Heart right ventricle (tissue), 16 donors: ENCODE measurements at regions of chr22 and their contacts with region 1.

Region 1: GRCh38 chr22:31148953-31149627 is 8.8 kb upstream of the PLA2G3 start:
- DNase-seq: peak; percentile 72 to 84
- ATAC-seq: peak; percentile 92 to 99 (median 96)
- H3K4me3 ChIP-seq: no peak overlapping the region
- H3K27ac ChIP-seq: peak overlapping the region; percentile 2 to 82 (median 77)
- H3K4me1 ChIP-seq: peaks cover 0 to 20% (median 12%) of the 10 kb centered on the region in 9 donors
- H3K27me3 ChIP-seq: no peaks in the 10 kb centered on the region
- CTCF ChIP-seq: peak in 8 of 9 donors; percentile 83 to 97 (median 92)

Region 2: GRCh38 chr22:30634471-30635233 is 514.4 kb before region 1 on chr22:
- intact Hi-C with region 1: loop called in 1 of 10 experiments (anchors 10 kb)
- DNase-seq: peak; percentile 87 to 89
- ATAC-seq: peak; percentile 68 to 89 (median 80)
- H3K4me3 ChIP-seq: peak overlapping the region; percentile 52 to 91 (median 74)
- H3K27ac ChIP-seq: peak overlapping the region; percentile 60 to 97 (median 90)
- H3K4me1 ChIP-seq: peaks cover 16 to 38% (median 33%) of the 10 kb centered on the region in 9 donors
- H3K27me3 ChIP-seq: no peaks in the 10 kb centered on the region
- CTCF ChIP-seq: peak; percentile 86 to 97 (median 95)

Region 3: DNA sequence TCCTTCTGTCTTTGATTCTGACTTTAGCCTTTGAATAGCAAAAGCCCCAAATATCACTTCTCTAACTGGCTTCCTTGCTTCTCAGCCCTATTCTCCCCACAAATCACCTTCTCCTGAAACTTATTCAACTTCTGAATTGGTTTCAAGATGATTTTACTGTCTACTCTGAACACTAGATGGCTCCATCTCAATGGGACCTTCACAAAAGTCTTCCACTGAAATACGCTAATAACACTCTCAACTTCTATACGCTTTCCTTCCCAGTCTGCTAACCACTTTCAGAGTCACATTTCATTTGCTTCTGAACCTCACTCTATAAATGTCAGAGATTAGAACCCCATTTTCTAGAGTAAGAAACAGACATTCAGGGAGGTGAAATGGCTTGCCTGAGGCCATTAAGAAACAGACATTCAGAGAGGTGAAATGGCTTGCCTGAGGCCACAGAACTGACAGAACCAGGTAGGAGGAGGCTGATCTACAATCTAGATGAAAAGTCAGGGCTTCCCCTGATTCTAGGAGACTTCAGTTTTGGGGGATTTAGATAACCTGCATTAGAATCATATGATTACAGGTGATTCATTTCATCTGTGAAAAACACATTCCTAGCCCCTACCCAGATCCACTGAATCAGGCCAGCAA is 201.2 kb before region 1 on chr22:
- intact Hi-C with region 1: loop called (anchors 2 to 10 kb)
- DNase-seq: peak in 1 of 2 donors; percentile 20
- ATAC-seq: peak in 7 of 8 donors; percentile 65 to 87 (median 77)
- H3K4me3 ChIP-seq: no peak overlapping the region
- H3K27ac ChIP-seq: peak overlapping the region in 8 of 10 donors; percentile 28 to 71 (median 56)
- H3K4me1 ChIP-seq: peaks cover 5 to 30% (median 21%) of the 10 kb centered on the region in 9 donors
- H3K27me3 ChIP-seq: no peaks in the 10 kb centered on the region
- CTCF ChIP-seq: peak; percentile 39 to 82 (median 67)

Region 4: DNA sequence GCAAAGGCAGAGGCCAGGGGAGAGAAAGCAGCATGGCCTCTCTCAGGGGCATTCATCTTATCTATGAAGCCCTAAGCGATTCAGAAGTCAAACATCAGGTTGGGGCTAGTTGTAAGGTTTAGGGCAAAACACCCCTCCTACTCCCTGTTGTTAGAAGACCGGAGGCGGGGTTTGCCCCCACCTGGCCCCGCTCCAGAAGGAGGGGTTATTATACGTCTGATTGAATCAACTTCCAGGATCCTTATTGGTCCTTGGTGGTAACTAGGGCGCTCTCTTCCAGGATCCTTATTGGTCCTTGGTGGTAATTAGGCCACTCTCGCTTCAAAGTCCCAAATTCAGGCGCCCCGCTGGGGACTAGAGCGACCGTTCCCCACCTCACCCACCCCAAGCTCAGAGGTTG is 80.1 kb before region 1 on chr22:
- intact Hi-C with region 1: no loop called
- DNase-seq: no peak
- ATAC-seq: no peak
- H3K4me3 ChIP-seq: no peak overlapping the region
- H3K27ac ChIP-seq: no peak overlapping the region
- H3K4me1 ChIP-seq: peaks cover 0 to 14% (median 0%) of the 10 kb centered on the region in 9 donors
- H3K27me3 ChIP-seq: no peaks in the 10 kb centered on the region
- CTCF ChIP-seq: no peak

Region 5: DNA sequence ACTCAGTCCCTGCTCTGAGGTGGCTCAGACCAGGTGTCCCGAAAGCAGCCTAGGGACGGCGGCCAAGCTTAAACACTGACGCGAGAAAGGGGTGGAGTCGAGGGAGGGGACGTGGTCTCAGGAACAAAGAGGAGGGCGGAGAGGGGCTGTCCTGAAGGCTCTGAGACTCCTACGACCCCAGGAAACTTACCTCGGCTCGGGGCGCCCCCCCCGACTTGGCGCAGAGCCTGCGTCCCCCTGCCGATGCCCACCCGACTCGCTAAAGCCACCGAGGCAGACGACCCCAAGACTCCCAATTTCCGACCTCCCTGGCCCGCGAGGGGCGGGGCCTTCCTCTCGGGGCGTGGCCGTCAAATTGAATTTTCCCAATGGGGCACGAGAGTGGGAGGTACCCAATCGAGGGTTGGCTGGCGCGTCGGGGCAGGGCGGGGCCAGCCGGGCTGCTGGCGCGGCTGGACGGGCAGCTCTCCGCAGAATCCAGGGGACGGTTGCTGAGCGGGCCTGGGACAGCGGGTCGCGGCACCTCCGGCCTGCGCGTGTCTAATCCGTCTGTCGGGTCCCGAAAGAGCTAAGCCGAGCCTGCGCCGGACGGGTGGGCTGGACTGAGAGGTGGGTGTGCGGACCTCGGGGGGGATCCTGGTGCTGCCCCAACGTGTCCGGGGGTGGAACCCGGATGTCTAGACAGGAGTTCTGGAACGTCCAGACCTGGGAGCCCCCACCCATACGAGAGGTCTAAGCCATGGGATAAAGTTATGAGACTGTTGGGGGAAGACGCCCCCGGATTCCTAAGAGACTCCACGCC is 68.0 kb before region 1 on chr22 and contains the start of gene SMTN:
- intact Hi-C with region 1: loop called in 4 of 10 experiments (anchors 5 kb)
- DNase-seq: peak; percentile 94 to 95
- ATAC-seq: peak; percentile 80 to 88 (median 84)
- H3K4me3 ChIP-seq: peak within 1 kb of the TSS; percentile 55 to 91 (median 74)
- H3K27ac ChIP-seq: peak within 1 kb of the TSS; percentile 78 to 98 (median 96)
- H3K4me1 ChIP-seq: peaks cover 16 to 56% (median 42%) of the 10 kb centered on the region in 9 donors
- H3K27me3 ChIP-seq: no peaks in the 10 kb centered on the region
- CTCF ChIP-seq: no peak
- total RNA-seq, gene SMTN: 146 to 290 (median 204) TPM

Region 6: GRCh38 chr22:31107178-31107893 is 41.8 kb before region 1 on chr22 and contains the start of gene SELENOM:
- intact Hi-C with region 1: loop called (anchors 1 to 5 kb)
- DNase-seq: peak; percentile 97 to 98
- ATAC-seq: peak; percentile 92 to 96 (median 94)
- H3K4me3 ChIP-seq: peak within 1 kb of the TSS; percentile 54 to 90 (median 80)
- H3K27ac ChIP-seq: peak within 1 kb of the TSS; percentile 55 to 96 (median 94)
- H3K4me1 ChIP-seq: peaks cover 0 to 45% (median 24%) of the 10 kb centered on the region in 9 donors
- H3K27me3 ChIP-seq: no peaks in the 10 kb centered on the region
- CTCF ChIP-seq: peak; percentile 91 to 99 (median 93)
- total RNA-seq, gene SELENOM: 21.5 to 73.9 (median 45.3) TPM

Region 7: DNA sequence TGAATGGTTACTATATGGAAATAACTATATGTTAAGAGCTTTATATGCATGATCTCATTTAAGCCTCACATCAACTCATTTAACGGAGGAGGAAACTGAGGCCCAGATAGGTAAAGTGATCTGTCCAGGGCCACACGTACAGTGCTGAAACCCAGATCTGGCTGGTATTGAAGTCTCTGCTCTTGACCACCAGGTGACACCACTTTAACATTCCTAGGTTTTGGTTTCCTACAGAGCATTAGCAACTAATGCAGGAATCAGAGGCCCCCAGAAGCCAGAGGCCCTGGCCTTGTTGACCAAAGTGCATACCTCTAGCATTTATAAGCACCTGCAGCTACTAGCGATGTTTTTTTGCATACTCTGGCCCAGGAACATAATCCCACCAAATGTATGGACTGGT is 50.1 kb after region 1 on chr22:
- intact Hi-C with region 1: no loop called
- DNase-seq: no peak
- ATAC-seq: no peak
- H3K4me3 ChIP-seq: no peak overlapping the region
- H3K27ac ChIP-seq: no peak overlapping the region
- H3K4me1 ChIP-seq: peaks cover 0 to 6% (median 0%) of the 10 kb centered on the region in 9 donors
- H3K27me3 ChIP-seq: no peaks in the 10 kb centered on the region
- CTCF ChIP-seq: peak in 5 of 9 donors; percentile 12 to 35 (median 30)

Region 8: DNA sequence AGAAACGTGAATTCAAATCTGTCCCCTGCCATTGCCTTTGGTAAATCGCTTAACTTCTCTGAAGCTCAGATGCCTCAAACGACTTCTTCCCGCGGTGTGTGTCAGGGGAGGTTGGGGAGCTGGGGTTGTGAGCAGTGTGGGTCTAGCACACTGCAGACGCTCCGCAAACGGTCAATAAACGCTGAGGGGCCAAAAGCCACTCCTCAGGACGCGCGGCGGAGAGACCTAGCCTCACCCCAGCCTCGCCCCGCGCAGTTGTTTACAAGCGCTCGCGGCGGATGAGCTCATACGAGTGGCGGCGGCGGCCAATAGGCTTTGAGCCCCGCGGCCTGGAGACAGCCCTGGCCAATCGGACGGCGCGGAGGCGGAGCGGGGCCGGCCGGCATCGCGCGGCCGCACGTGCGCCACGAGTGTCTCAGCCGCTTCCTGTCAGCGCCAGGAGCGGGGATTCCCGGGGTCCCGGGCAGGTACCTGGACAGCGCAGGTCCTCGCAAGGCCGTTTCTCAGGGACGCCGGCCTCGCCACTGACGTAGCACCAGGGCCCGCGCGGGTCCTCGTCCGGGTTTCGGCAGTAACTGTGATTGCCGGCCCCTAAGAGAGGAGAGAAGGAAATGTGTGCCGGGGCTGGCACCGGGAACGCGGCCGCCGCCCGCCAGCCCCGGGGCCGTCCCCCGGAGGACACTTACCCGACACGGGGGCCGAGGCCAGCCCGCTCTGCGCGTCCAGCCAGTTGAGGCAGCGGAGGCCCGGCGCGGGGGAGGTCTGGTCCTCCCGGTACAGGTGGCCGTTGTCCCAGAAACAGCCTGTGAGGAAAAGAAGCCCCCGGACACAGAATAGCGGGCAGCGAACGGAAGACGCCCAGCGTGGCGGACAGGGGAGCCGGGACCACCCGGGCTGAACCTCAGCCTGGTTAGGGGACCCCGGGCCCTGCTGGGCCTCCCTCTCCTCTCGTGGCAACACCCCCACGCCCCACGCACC is 141.7 kb after region 1 on chr22:
- intact Hi-C with region 1: no loop called
- DNase-seq: peak; percentile 94 to 96
- ATAC-seq: peak; percentile 93 to 96 (median 94)
- H3K4me3 ChIP-seq: peak overlapping the region; percentile 42 to 89 (median 78)
- H3K27ac ChIP-seq: peak overlapping the region; percentile 93 to 99 (median 95)
- H3K4me1 ChIP-seq: peaks cover 18 to 89% (median 52%) of the 10 kb centered on the region in 9 donors
- H3K27me3 ChIP-seq: no peaks in the 10 kb centered on the region
- CTCF ChIP-seq: no peak